ENCODE measurements at regions of chr12 and their contacts with region 1.

Region 1: DNA sequence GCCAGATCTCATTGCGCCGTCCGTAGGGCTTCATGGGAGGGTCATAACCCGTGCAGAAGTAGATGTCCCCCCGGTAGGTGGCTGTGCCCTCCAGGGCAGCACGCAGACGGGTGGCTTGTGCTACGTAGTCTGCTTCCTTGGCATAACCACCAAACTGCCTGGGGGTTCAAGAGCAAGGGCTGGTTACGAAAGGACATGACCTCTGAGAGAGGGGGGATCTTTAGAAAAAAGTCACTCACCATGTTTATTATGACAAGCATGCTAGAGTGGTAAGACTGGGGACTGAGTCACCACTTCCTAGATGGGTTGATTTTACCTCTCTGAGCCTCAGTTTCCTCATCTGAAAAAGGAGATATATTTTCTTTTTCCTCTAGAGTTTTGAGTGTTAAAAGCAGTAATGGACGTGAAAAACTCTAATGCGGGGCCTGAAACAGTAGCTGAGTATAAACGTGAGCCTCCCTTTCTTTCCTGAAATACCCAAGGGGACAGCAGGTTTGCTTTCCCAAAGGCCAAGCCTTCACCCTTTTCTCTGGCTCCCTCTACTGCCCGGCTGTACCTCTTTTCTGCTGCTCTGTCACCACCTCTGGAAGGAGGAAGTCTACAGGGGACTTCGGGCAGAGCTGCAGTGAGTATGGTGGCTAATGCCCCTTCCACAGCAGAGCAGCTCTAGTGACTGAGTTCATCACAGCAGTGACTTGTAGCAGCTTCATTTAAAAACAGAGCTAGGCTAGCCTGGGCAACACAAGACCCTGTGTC is 23.5 kb upstream of the GPRC5D start:
- DNase-seq: no peak
- ATAC-seq: no peak
- H3K4me3 ChIP-seq: no peak overlapping the region
- H3K4me3 Mint-ChIP-seq: no peak overlapping the region
- H3K27ac ChIP-seq: no peak overlapping the region
- H3K27ac Mint-ChIP-seq: no peak overlapping the region
- H3K4me1 ChIP-seq: no peaks in the 10 kb centered on the region
- H3K4me1 Mint-ChIP-seq: no peaks in the 10 kb centered on the region
- H3K27me3 ChIP-seq: no peaks in the 10 kb centered on the region
- H3K27me3 Mint-ChIP-seq: no peaks in the 10 kb centered on the region

Region 2: DNA sequence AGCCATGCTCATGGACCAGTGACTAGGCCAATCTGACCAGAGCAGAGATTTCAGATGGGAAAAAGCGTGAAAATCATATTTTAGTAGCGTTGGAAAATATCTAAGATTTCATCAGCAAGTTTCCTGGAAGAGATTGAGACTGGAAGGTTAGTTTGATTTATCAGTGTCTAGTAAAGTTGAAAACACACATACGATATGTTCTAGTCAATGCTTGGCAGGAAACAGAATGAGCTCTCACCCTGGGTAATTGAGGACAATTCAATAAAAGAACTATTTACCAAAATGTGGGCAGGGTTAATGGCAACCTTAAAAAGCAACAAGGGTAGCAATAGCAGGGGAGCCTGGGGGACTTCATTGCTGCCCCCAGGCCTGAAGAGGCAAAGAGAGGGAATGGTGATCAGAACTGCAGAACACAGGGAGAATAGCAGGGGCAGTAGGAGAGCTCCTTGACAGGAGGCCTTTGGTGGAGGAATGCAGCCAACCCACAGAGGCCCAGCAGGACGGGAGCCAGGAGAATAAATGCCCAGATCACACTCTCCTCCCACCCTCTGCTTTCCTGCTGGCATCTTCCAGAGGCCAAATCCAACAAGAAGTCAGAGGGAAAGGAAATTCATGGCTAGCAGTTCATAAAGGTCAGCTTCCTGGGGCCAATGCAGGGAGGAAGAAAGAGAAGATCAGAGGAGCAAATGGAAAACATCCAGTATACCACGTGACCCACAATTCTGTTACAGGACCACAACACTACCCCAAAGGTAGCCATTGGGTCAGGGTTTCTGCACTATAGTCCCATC is 681.1 kb before region 1 on chr12:
- CTCF ChIA-PET with region 1: no interaction called
- POLR2A ChIA-PET with region 1: no interaction called
- DNase-seq: no peak
- ATAC-seq: no peak
- H3K4me3 ChIP-seq: no peak overlapping the region
- H3K4me3 Mint-ChIP-seq: no peak overlapping the region
- H3K27ac ChIP-seq: no peak overlapping the region
- H3K27ac Mint-ChIP-seq: no peak overlapping the region
- H3K4me1 ChIP-seq: no peaks in the 10 kb centered on the region
- H3K4me1 Mint-ChIP-seq: peaks cover 6 to 9% (median 9%) of the 10 kb centered on the region in 3 donors
- H3K27me3 ChIP-seq: no peaks in the 10 kb centered on the region
- H3K27me3 Mint-ChIP-seq: no peaks in the 10 kb centered on the region

Region 3: DNA sequence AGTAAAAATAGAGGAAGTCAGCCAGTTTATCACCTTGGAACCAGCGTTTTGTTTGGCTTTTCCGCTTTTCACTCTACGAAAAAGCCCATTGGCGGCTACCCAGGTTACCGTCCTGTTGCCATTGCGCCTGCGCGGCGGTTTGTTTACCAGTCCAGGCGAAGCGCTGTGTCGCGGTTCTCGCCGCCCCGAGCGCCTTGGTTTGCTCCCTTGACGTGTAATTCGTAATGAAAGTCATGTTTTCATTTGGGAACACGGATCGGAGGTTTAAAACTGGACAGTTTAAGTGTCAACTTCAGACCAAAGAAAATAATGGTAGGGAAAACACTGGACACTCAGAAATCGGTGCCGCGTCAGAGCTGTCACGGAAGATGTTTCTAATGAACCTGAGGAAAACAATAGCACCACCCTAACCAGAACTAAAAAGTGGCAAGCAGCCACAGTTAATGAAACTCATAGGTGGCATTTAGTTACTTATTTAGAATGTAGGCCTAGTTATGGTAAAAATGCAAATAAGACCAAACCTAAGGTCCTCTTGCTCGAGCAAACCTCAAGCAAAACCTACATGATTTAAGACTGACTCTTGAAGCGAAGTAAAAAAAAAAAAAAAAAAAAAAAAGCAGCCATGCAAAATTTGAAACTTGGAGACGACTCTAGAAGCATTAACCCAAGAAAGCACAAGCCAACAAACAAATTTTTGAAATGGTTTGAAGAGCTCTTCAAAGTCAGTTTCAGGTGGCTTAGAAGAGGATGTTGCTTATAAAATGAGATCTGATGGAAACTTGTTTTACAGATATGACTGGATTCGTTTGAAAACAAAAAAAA is 278.7 kb before region 1 on chr12:
- CTCF ChIA-PET with region 1: no interaction called
- POLR2A ChIA-PET with region 1: no interaction called
- DNase-seq: peak; percentile 88 to 95 (median 92)
- ATAC-seq: peak; percentile 88 to 92 (median 90)
- H3K4me3 ChIP-seq: peak overlapping the region; percentile 57 to 66
- H3K4me3 Mint-ChIP-seq: peak overlapping the region; percentile 87 to 93 (median 93)
- H3K27ac ChIP-seq: peak overlapping the region; percentile 98
- H3K27ac Mint-ChIP-seq: peak overlapping the region; percentile 99 to 100
- H3K4me1 ChIP-seq: peaks cover 9 to 10% of the 10 kb centered on the region in 2 experiments
- H3K4me1 Mint-ChIP-seq: peaks cover 31 to 37% (median 32%) of the 10 kb centered on the region in 3 donors
- H3K27me3 ChIP-seq: no peaks in the 10 kb centered on the region
- H3K27me3 Mint-ChIP-seq: no peaks in the 10 kb centered on the region

Region 4: GRCh38 chr12:12845025-12845787 is 130.3 kb before region 1 on chr12:
- CTCF ChIA-PET with region 1: interaction called, 3 to 10 read pairs
- POLR2A ChIA-PET with region 1: no interaction called
- DNase-seq: no peak
- ATAC-seq: no peak
- H3K4me3 ChIP-seq: no peak overlapping the region
- H3K4me3 Mint-ChIP-seq: no peak overlapping the region
- H3K27ac ChIP-seq: no peak overlapping the region
- H3K27ac Mint-ChIP-seq: peak overlapping the region; percentile 73 to 75
- H3K4me1 ChIP-seq: peaks cover 12 to 19% of the 10 kb centered on the region in 2 experiments
- H3K4me1 Mint-ChIP-seq: peaks cover 25 to 32% (median 26%) of the 10 kb centered on the region in 3 donors
- H3K27me3 ChIP-seq: no peaks in the 10 kb centered on the region
- H3K27me3 Mint-ChIP-seq: no peaks in the 10 kb centered on the region

Region 5: GRCh38 chr12:13049816-13050215 is 74.3 kb after region 1 on chr12:
- CTCF ChIA-PET with region 1: no interaction called
- POLR2A ChIA-PET with region 1: no interaction called
- DNase-seq: no peak
- ATAC-seq: no peak
- H3K4me3 ChIP-seq: no peak overlapping the region
- H3K4me3 Mint-ChIP-seq: no peak overlapping the region
- H3K27ac ChIP-seq: no peak overlapping the region
- H3K27ac Mint-ChIP-seq: no peak overlapping the region
- H3K4me1 ChIP-seq: peaks cover 0 to 2% of the 10 kb centered on the region in 2 experiments
- H3K4me1 Mint-ChIP-seq: peaks cover 2 to 20% (median 14%) of the 10 kb centered on the region in 3 donors
- H3K27me3 ChIP-seq: no peaks in the 10 kb centered on the region
- H3K27me3 Mint-ChIP-seq: no peaks in the 10 kb centered on the region

Measured in T-cell (primary cell).